ENCODE measurements at regions of chr22 and their contacts with region 1.

Region 1: GRCh38 chr22:36352803-36353507 is 34.8 kb downstream of the MYH9 start:
- DNase-seq: peak; percentile 65 to 87 (median 83)
- H3K4me3 ChIP-seq: no peak overlapping the region
- H3K27ac ChIP-seq: peak overlapping the region; percentile 43 to 76
- H3K4me1 ChIP-seq: peaks cover 44% of the 10 kb centered on the region
- H3K27me3 ChIP-seq: no peaks in the 10 kb centered on the region
- CTCF ChIP-seq: no peak
- EP300 ChIP-seq: no peak
- POLR2A ChIP-seq: no peak

Region 2: DNA sequence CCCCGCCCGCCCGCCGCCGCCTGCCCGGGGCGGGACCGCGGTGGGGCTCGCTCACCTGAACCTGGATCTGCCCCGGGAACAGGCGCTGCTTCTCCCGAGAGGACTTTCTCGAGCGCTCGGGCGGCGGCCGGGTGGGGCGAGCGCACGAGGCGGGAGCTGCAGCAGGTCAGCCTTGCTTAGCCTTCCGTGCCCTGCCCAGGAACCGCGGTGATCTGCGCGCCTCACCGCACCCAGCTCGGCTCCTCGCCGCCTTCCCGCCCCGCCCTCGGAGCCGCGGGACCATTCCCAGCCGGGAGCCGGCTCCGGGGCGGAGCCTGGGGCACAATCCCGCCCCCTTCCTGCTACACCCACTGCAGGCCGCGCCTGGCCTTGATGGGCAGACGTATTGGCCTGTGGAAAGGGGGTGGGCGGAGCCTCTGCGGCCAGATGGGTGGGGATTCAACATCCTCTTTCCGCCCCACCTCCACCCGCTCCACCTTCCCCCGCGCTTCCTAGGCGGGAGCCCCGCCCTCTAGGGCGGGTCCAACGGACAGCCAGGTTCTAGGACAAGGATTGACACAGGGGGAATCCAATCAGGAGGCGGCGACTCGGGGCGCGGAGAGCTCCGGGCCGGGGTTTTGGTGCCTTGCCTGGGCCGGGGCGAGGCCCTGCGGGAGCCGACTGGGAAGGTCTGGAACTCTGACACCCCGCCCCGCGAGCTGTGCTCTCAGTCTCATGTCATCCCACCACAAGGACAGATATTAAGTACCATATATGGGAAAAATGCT is 35.0 kb after region 1 on chr22 and contains the start of gene MYH9:
- intact Hi-C with region 1: loop called in 1 of 4 experiments (anchors 2 kb)
- DNase-seq: peak; percentile 100
- H3K4me3 ChIP-seq: peak within 1 kb of the TSS; percentile 68
- H3K27ac ChIP-seq: peak within 1 kb of the TSS; percentile 66 to 74
- H3K4me1 ChIP-seq: peaks cover 5% of the 10 kb centered on the region
- H3K27me3 ChIP-seq: no peaks in the 10 kb centered on the region
- CTCF ChIP-seq: no peak
- EP300 ChIP-seq: no peak
- POLR2A ChIP-seq: peak; percentile 91
- total RNA-seq, gene MYH9: 128 to 452 (median 348) TPM

Region 3: GRCh38 chr22:36659762-36660509 is 307.0 kb after region 1 on chr22:
- intact Hi-C with region 1: no loop called
- DNase-seq: peak; percentile 33 to 70 (median 50)
- H3K4me3 ChIP-seq: no peak overlapping the region
- H3K27ac ChIP-seq: no peak overlapping the region
- H3K4me1 ChIP-seq: no peaks in the 10 kb centered on the region
- H3K27me3 ChIP-seq: no peaks in the 10 kb centered on the region
- CTCF ChIP-seq: no peak
- EP300 ChIP-seq: no peak
- POLR2A ChIP-seq: no peak